Caco-2 (cell line): ENCODE measurements at regions of chr16 and their contacts with region 1.

Region 1: DNA sequence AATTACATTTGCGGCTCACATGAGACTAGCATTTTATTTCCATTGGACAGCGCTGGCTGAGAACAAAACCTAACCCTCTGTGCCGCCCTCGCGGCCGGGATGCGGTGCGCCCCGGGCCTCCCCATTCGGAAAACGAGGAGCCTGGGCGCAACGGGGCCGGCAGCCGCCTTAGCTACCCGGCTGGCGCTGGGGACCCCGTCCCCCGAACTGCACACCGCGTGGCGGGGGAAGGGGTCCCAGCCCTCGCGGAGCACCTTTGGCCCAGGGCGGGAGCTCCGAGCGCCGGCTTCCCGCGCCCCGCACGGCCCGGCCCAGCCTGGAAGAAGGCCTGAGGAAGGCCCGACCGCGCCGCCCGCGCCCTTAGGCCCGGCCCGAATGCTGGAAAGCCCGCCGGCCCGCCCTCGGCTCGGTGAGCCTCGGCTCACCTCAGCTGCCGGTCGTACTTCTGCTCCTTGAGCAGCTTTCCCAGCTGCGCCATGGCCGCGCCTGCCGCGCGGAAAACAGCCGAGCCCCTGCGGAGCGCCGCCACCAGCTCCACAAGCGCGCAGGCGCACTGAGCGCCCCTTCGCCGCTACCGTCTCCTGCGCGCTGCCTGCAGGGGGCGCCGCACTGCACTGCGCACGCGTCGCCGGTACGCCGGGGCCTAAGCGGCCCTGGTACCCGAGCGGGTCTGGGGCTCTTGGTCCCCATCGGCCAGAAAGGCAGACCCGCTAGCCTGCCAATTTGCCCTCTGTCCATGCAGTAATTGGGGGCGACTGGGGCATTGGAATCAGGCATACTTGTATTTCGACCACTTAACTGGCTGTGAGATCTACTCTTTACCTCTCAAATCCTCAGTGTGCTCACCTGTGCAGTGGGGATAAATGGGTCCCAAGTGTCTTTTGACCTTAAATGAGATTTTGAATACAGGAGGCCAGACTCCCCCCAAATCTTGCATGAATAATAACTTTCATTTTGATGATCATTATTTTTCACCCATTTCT is at the start of gene NAE1:
- DNase-seq: peak; percentile 86 to 96
- H3K4me3 ChIP-seq: peak within 1 kb of the TSS; percentile 77
- H3K4me3 Mint-ChIP-seq: peak within 1 kb of the TSS; percentile 65
- H3K27ac Mint-ChIP-seq: no peak within 1 kb of the TSS
- H3K4me1 ChIP-seq: no peaks in the 10 kb centered on the region; the same call in 1 of the 2 replicates
- H3K4me1 Mint-ChIP-seq: no peaks in the 10 kb centered on the region
- H3K27me3 ChIP-seq: no peaks in the 10 kb centered on the region
- H3K27me3 Mint-ChIP-seq: peaks cover 3% of the 10 kb centered on the region
- CTCF ChIP-seq: peak; percentile 97
- total RNA-seq, gene NAE1: 141 and 146 TPM in 2 replicates

Region 2: DNA sequence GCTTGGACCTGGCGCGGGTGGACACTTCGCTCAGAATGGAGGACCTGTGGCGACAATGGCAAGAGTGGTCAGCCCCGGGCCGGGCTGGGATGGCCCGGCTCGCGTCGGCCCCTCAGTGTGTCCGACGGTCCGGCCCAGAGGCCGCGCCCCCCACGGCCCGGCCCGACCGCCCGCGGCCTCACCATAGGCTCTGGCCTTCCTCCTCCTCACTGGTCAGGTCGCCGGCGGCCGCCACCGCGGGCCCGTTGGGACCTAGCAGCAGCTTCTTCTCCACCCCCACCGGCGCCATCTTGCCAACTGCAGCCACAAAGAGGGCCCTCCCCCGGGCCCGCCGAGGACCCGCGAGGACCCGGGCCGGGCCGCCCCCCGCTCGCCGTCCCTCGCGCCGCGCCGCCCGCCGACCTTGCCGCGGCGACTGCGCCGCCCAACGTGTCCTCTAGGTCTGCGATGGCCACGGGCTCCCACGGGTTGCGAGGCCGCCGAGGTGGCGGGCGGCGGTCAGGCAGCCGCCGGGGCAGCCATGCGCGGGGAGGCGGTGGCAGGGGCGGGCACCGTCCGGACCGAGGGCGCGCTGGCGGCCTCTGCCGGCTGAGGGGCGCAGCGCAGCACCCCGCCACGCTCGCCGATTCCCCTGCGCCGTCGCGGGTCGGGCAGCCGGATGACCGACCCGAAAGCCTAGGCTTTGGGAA is 79.3 kb before region 1 on chr16 and contains the start of gene DYNC1LI2:
- CTCF ChIA-PET with region 1: interaction called, 11 read pairs
- POLR2A ChIA-PET with region 1: no interaction called
- intact Hi-C with region 1: no loop called
- DNase-seq: peak; percentile 78 to 94
- H3K4me3 ChIP-seq: peak within 1 kb of the TSS; percentile 100
- H3K4me3 Mint-ChIP-seq: peak within 1 kb of the TSS; percentile 78
- H3K27ac Mint-ChIP-seq: peak within 1 kb of the TSS; percentile 55
- H3K4me1 ChIP-seq: peaks cover 12% of the 10 kb centered on the region; the same call in 1 of the 2 replicates
- H3K4me1 Mint-ChIP-seq: peaks cover 26% of the 10 kb centered on the region
- H3K27me3 ChIP-seq: no peaks in the 10 kb centered on the region
- H3K27me3 Mint-ChIP-seq: no peaks in the 10 kb centered on the region
- CTCF ChIP-seq: peak; percentile 61 to 95
- total RNA-seq, gene DYNC1LI2: 180 and 182 TPM in 2 replicates

Region 3: DNA sequence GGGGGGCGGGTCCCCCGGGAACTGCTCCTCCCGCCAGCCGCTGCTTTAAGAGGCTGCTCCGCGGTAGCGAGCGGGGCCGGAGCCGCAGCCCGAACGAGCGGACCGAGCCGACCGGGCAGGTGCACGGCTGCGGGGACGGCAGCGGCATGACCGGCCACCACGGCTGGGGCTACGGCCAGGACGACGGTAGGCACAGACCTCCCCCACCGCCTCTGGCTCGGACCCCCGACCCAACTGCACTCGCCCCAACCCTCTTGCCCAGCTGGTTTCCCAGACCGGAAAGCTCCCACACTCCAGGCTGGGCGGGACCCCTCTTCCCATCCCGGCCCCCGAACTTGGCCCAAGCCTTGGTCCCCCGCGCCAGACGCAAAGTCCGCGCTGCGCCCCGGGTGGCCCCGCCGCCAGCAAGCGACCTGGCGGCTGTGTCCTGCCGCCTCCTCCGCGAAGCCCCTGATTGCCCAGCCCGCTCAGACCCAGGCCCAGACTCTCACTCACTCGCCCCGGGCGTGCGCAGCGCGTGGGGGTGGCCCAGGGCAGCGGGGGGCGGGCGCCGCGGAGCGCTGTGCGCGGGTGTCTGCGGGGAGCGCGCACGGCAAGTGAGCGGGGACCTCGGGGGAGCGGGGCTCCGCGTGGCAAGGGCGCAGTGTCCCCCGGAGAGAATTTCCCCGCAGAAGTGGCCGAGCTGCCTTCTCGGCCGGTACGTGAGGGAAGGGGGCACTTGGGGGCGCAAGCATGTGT is 13.8 kb after region 1 on chr16 and contains the start of gene CA7:
- CTCF ChIA-PET with region 1: interaction called, 45 read pairs
- POLR2A ChIA-PET with region 1: interaction called, 3 read pairs
- intact Hi-C with region 1: no loop called
- DNase-seq: peak in 1 of 2 experiments; percentile 33
- H3K4me3 ChIP-seq: peak within 1 kb of the TSS; percentile 43
- H3K4me3 Mint-ChIP-seq: peak within 1 kb of the TSS; percentile 68
- H3K27ac Mint-ChIP-seq: no peak within 1 kb of the TSS
- H3K4me1 ChIP-seq: peaks cover 23% of the 10 kb centered on the region
- H3K4me1 Mint-ChIP-seq: peaks cover 21% of the 10 kb centered on the region
- H3K27me3 ChIP-seq: no peaks in the 10 kb centered on the region; the same call in 1 of the 2 replicates
- H3K27me3 Mint-ChIP-seq: peaks cover 13% of the 10 kb centered on the region
- CTCF ChIP-seq: no peak
- total RNA-seq, gene CA7: 0.35 and 0.68 TPM in 2 replicates

Region 4: DNA sequence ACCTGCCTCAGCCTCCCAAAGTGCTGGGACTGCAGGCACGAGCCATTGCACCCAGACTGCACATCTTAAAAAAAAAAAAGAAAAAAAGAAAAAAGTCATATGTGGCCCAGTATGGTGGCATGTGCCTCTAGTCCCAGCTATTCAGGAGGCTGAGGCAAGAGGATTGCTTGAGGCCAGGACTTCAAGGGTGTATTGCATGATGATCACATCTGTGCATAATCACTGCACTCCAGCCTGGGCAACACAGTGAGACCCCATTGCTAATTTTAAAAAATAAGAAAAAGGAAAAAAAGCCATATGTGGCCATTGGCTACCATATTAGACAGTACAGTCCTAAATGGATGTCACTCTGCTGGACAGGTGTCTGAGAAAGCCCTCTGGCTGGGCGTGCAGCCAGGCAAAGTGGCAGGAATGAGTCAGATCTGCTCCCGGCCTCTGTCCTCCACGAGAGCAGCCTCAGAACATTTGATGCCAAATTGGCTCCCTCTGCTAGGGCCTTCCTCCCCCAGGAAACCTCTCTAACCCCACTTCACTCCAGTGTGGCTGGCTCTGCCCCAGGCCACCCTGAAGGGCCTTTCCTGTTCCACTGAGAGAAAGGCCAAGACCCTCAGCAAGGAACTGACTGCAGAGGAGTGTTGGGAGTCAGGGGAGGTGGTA is 28.2 kb after region 1 on chr16:
- CTCF ChIA-PET with region 1: interaction called, 25 read pairs
- POLR2A ChIA-PET with region 1: interaction called, 5 read pairs
- intact Hi-C with region 1: no loop called
- DNase-seq: no peak
- H3K4me3 ChIP-seq: no peak overlapping the region
- H3K4me3 Mint-ChIP-seq: no peak overlapping the region
- H3K27ac Mint-ChIP-seq: no peak overlapping the region
- H3K4me1 ChIP-seq: peaks cover 30% of the 10 kb centered on the region
- H3K4me1 Mint-ChIP-seq: peaks cover 12% of the 10 kb centered on the region
- H3K27me3 ChIP-seq: no peaks in the 10 kb centered on the region
- H3K27me3 Mint-ChIP-seq: no peaks in the 10 kb centered on the region
- CTCF ChIP-seq: no peak

Region 5: DNA sequence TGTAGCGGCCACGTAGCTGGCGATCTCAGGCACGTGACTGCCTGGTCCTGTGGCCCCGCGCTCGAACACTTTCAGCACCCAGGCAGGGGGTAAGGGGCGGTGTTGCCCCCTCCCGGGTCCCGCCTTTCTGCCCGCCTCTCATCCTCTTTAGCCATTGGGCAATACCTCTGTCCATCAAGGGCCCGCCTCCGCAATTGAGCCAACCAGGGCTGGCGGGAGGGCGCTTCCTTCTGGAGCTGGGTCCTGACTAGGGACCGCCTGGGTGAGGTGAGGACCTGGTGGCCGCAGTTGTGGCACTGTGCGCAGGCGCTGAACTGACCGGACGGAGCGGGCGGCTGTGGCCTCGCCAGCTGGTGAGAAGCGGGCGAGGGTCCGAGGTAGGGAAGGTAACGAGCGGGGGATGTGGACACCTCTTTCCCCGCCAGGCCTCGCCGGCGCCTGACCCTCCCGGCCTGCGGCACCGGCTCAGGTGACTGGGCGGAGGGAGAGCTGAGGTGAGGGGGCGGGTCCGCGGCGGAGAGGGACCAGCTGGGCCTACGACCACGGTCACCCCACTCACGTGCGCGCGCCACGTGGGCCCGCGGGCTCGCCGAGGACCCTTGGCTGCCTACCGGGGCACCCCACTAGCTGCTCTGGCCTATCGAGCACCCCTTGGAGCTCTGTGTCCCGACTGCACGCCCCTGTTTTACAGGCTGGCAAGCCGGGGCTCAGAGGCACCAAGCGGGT is 49.7 kb after region 1 on chr16 and contains the start of gene PDP2:
- CTCF ChIA-PET with region 1: interaction called, 45 read pairs
- POLR2A ChIA-PET with region 1: interaction called, 16 read pairs
- intact Hi-C with region 1: no loop called
- DNase-seq: peak; percentile 99
- H3K4me3 ChIP-seq: peak within 1 kb of the TSS; percentile 95
- H3K4me3 Mint-ChIP-seq: peak within 1 kb of the TSS; percentile 89
- H3K27ac Mint-ChIP-seq: peak within 1 kb of the TSS; percentile 81
- H3K4me1 ChIP-seq: peaks cover 23% of the 10 kb centered on the region
- H3K4me1 Mint-ChIP-seq: peaks cover 16% of the 10 kb centered on the region
- H3K27me3 ChIP-seq: no peaks in the 10 kb centered on the region
- H3K27me3 Mint-ChIP-seq: no peaks in the 10 kb centered on the region
- CTCF ChIP-seq: no peak
- total RNA-seq, gene PDP2: 37.7 and 44.4 TPM in 2 replicates

Region 6: GRCh38 chr16:67024384-67025209 is 193.9 kb after region 1 on chr16:
- CTCF ChIA-PET with region 1: no interaction called
- POLR2A ChIA-PET with region 1: no interaction called
- intact Hi-C with region 1: no loop called
- DNase-seq: no peak
- H3K4me3 ChIP-seq: no peak overlapping the region
- H3K4me3 Mint-ChIP-seq: no peak overlapping the region
- H3K27ac Mint-ChIP-seq: peak overlapping the region; percentile 8
- H3K4me1 ChIP-seq: peaks cover 27% of the 10 kb centered on the region
- H3K4me1 Mint-ChIP-seq: peaks cover 40% of the 10 kb centered on the region
- H3K27me3 ChIP-seq: no peaks in the 10 kb centered on the region
- H3K27me3 Mint-ChIP-seq: no peaks in the 10 kb centered on the region
- CTCF ChIP-seq: no peak